Naive thymus-derived CD4-positive, alpha-beta T cell (primary cell): ENCODE measurements at regions of chr2 and their contacts with region 1.

Region 1: GRCh38 chr2:102708847-102709559 is 52.8 kb upstream of the TMEM182 start:
- DNase-seq: no peak
- ATAC-seq: no peak
- H3K4me3 ChIP-seq: no peak overlapping the region
- H3K4me3 Mint-ChIP-seq: no peak overlapping the region
- H3K27ac ChIP-seq: no peak overlapping the region
- H3K27ac Mint-ChIP-seq: no peak overlapping the region
- H3K4me1 ChIP-seq: no peaks in the 10 kb centered on the region
- H3K4me1 Mint-ChIP-seq: no peaks in the 10 kb centered on the region
- H3K27me3 ChIP-seq: no peaks in the 10 kb centered on the region
- H3K27me3 Mint-ChIP-seq: peaks cover 4 to 17% (median 8%) of the 10 kb centered on the region in 5 donors

Region 2: DNA sequence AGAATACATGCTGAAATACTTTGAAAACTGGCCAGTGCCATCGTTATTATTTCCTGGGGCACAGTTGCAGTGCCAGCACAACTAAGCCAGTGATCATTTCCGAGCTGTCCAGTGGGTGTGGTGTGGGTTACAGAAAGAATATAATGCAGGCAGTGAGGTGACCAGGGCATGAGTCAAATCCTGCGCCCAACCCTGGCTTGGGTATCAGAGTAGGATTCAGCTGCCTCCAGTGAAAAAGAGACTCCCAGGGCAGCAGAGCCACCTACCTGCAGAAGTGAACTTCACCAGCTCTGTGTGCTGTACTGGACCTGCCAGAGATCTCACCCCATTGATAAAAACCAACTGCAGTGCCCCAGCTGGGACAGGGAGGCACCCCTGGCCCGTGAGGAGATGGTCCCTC is 71.6 kb before region 1 on chr2:
- CTCF ChIA-PET with region 1: no interaction called
- POLR2A ChIA-PET with region 1: no interaction called
- intact Hi-C with region 1: no loop called
- DNase-seq: no peak
- ATAC-seq: no peak
- H3K4me3 ChIP-seq: no peak overlapping the region
- H3K4me3 Mint-ChIP-seq: no peak overlapping the region
- H3K27ac ChIP-seq: no peak overlapping the region
- H3K27ac Mint-ChIP-seq: no peak overlapping the region
- H3K4me1 ChIP-seq: no peaks in the 10 kb centered on the region
- H3K4me1 Mint-ChIP-seq: no peaks in the 10 kb centered on the region
- H3K27me3 ChIP-seq: no peaks in the 10 kb centered on the region
- H3K27me3 Mint-ChIP-seq: peaks cover 0 to 15% (median 4%) of the 10 kb centered on the region in 5 donors

Region 3: DNA sequence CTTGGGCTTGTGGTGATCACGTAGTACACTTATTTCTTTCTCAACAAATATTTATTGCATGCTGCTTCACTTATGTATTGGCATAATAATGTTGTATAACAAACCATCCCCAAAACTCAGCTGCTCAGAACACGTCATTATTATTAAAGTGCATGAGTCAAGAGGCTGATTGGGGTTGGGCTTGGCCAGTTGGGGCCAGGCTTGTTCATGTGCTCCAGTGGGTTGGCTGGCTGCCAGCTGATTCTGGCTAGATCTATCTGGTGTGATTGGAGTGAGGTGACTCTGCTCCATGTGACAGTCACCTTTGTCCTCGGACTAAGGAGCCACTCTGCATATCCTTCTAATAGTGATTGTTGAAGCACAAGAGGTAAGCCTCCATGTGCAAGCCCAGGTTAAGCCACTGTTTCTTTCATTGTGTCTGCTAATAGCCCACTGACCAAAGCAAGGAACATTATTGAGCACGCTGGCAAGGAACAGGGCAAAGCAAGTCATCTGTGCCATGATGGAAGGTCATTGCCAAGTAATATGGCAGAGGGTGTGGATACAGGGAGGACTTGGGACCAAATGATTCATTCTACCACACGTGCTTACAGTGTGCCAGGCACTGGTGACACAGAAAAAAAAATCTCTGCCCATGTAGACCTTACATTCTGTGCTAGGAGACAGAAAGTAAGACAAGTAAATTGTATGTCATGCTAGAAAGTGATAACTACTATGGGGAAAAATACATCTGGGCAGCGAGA is 10.5 kb before region 1 on chr2:
- CTCF ChIA-PET with region 1: no interaction called
- POLR2A ChIA-PET with region 1: no interaction called
- intact Hi-C with region 1: loop called in 1 of 2 experiments (anchors 2 kb)
- DNase-seq: no peak
- ATAC-seq: no peak
- H3K4me3 ChIP-seq: no peak overlapping the region
- H3K4me3 Mint-ChIP-seq: no peak overlapping the region
- H3K27ac ChIP-seq: no peak overlapping the region
- H3K27ac Mint-ChIP-seq: no peak overlapping the region
- H3K4me1 ChIP-seq: no peaks in the 10 kb centered on the region
- H3K4me1 Mint-ChIP-seq: no peaks in the 10 kb centered on the region
- H3K27me3 ChIP-seq: peaks cover 0 to 3% of the 10 kb centered on the region in 2 donors
- H3K27me3 Mint-ChIP-seq: peaks cover 0 to 10% (median 3%) of the 10 kb centered on the region in 5 donors